ENCODE measurements at regions of chr17 and their contacts with region 1.

Region 1: DNA sequence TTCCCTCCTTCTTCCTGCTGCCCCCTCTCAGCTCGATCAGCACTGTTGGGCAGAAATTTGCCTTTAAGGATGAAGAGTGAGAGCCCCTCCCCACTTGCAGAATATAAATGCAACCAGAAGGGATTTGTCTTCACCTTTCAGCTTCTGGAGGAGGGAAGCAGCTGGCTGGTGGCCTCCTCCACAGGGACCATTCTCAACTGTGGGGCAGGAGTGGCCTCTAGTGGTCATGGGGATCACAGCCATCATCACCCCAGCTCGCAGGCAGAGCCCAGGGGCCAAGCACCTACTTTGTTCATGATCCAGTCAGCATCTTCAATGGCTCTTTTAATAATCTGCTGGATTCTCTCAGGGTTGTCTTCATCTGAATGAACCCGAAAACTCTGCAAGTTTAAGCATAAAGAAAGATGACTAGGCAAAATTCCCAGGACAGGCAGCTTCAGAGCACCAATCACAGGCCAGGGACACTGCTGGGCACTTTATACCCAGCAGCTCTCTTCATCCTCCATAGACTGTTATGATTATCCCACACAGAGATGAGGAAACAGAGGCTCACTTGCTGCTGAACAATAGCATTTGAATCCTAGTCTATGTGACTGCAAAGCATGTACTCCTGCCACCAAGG is 13.1 kb downstream of the LYRM9 start:
- DNase-seq: peak; percentile 54
- ATAC-seq: peak; percentile 98
- H3K4me3 ChIP-seq: no peak overlapping the region
- H3K27ac ChIP-seq: no peak overlapping the region
- H3K4me1 ChIP-seq: no peaks in the 10 kb centered on the region
- H3K27me3 ChIP-seq: no peaks in the 10 kb centered on the region; the same call in 1 of the 2 replicates
- CTCF ChIP-seq: peak; percentile 88
- POLR2A ChIP-seq: no peak
- RAD21 ChIP-seq: peak; percentile 93

Region 2: GRCh38 chr17:27760069-27760885 is 119.8 kb before region 1 on chr17:
- CTCF ChIA-PET with region 1: interaction called, 32 read pairs
- POLR2A ChIA-PET with region 1: no interaction called
- dilution Hi-C with region 1: no loop called
- in situ Hi-C with region 1: loop called (anchors 5 kb)
- intact Hi-C with region 1: loop called (anchors 1 kb)
- DNase-seq: peak; percentile 14
- ATAC-seq: peak; percentile 75
- H3K4me3 ChIP-seq: no peak overlapping the region
- H3K27ac ChIP-seq: no peak overlapping the region
- H3K4me1 ChIP-seq: no peaks in the 10 kb centered on the region
- H3K27me3 ChIP-seq: no peaks in the 10 kb centered on the region; the same call in 1 of the 2 replicates
- CTCF ChIP-seq: peak; percentile 74
- POLR2A ChIP-seq: no peak
- RAD21 ChIP-seq: peak; percentile 67

Region 3: GRCh38 chr17:28008542-28008941 is 128.4 kb after region 1 on chr17:
- CTCF ChIA-PET with region 1: no interaction called
- POLR2A ChIA-PET with region 1: no interaction called
- dilution Hi-C with region 1: no loop called
- in situ Hi-C with region 1: no loop called
- intact Hi-C with region 1: no loop called
- DNase-seq: peak; percentile 66
- ATAC-seq: peak; percentile 92
- H3K4me3 ChIP-seq: no peak overlapping the region
- H3K27ac ChIP-seq: no peak overlapping the region
- H3K4me1 ChIP-seq: no peaks in the 10 kb centered on the region
- H3K27me3 ChIP-seq: peaks cover 7% of the 10 kb centered on the region; the same call in 1 of the 2 replicates
- CTCF ChIP-seq: no peak
- POLR2A ChIP-seq: no peak
- RAD21 ChIP-seq: peak; percentile 29; the same call in 1 of the 2 replicates